BJ (cell line): ENCODE measurements at regions of chr2 and their contacts with region 1.

Region 1: GRCh38 chr2:198053776-198054698 is 249.6 kb downstream of the PLCL1 start:
- DNase-seq: no peak
- H3K4me3 ChIP-seq: no peak overlapping the region
- H3K27me3 ChIP-seq: no peaks in the 10 kb centered on the region
- CTCF ChIP-seq: peak; percentile 74

Region 2: DNA sequence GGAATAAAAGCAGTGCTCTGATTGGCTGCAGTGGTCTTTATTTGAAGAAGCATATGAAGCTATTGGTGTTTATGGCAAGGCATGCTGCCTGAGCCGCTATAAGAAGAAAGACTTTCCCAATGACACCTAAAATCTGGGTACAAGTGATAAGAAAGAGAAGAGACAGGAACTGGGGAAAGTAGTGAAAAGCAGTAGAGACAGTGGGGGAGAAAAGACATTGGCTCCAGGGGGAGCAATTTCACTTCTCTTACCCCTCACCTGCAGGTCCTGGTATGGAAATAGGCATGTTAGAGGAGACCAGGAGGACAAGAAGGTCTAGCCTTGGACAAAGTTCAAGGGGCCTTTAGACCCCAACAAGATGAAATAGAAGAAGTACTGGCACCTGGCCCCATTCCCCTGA is 202.6 kb before region 1 on chr2:
- CTCF ChIA-PET with region 1: interaction called, 4 read pairs
- POLR2A ChIA-PET with region 1: interaction called, 10 read pairs
- DNase-seq: no peak
- H3K4me3 ChIP-seq: no peak overlapping the region
- H3K27me3 ChIP-seq: 0 out of 2 replicates have a peak, but pooled peaks cover 1% of the 10 kb centered on the region
- CTCF ChIP-seq: peak; percentile 15; the same call in 1 of the 2 replicates